MCF 10A (cell line): ENCODE measurements at regions of chr10 and their contacts with region 1.

Region 1: GRCh38 chr10:104300736-104301292 is 31.8 kb downstream of the GSTO2 start:
- DNase-seq: peak; percentile 90
- H3K4me3 Mint-ChIP-seq: no peak overlapping the region
- H3K27ac Mint-ChIP-seq: peak overlapping the region; percentile 93
- H3K4me1 Mint-ChIP-seq: peaks cover 34% of the 10 kb centered on the region
- H3K27me3 Mint-ChIP-seq: no peaks in the 10 kb centered on the region
- CTCF ChIP-seq: no peak

Region 2: DNA sequence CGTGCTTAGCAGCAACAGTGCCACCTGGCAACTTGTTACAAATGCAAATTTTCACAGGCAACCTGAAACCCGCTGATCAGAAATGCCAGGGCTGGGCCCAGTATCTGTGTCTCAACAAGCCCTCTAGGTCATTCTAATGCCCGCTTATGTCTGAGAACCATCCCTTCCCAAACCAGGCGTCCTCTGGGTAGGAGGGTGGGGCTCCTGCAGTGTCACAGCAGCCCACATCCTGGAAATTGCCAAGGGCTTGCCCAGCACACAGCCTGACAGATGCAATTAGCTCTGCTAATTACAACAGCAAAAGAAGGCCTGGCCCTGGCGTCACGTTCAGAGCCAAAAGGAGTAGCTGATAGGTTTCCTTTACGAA is 21.6 kb after region 1 on chr10:
- CTCF ChIA-PET with region 1: interaction called, 105 read pairs
- POLR2A ChIA-PET with region 1: interaction called, 95 read pairs
- intact Hi-C with region 1: no loop called
- DNase-seq: peak; percentile 91
- H3K4me3 Mint-ChIP-seq: no peak overlapping the region
- H3K27ac Mint-ChIP-seq: peak overlapping the region; percentile 95
- H3K4me1 Mint-ChIP-seq: peaks cover 74% of the 10 kb centered on the region
- H3K27me3 Mint-ChIP-seq: no peaks in the 10 kb centered on the region
- CTCF ChIP-seq: no peak

Region 3: DNA sequence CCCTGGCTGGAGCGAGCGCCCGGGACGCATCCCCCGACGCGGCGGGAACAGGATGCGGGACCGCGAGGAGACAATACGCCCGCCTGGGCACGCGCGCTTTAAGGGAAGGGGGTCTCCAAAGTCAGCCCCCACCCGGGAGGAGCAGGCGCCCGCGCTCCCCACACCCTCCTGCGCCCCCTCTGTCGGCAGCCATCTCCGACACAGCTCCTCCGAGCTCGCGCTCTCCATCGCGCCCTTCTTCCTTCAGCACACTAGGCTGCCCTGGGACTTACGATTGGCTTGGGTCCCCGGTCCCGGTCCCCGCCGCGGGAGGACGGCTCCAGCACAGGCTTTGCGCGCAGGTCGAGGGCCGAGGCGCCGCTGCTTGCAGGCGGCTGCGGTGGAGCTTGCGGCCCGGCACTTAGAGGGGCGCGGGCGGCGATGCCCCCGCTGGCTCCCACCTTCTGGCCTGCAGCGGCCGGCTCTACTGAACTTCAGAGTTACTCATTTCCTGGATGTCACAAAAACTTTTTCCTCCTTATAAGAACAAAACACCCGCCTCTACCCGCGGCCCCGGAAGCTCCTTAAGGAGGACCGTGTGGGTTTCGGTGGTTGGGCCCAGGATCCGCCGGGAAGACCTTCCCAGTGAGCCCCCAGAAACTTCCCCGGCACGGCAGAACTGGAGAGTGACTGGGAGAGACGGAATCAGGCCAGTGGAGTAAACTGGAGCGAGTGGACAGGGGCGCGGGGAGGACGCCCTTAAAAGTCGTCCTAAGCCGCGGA is 37.3 kb after region 1 on chr10 and contains the start of gene ITPRIP:
- CTCF ChIA-PET with region 1: interaction called, 33 read pairs
- POLR2A ChIA-PET with region 1: interaction called, 67 read pairs
- intact Hi-C with region 1: loop called (anchors 2 kb)
- DNase-seq: peak; percentile 81
- H3K4me3 Mint-ChIP-seq: peak within 1 kb of the TSS; percentile 80
- H3K27ac Mint-ChIP-seq: peak within 1 kb of the TSS; percentile 97
- H3K4me1 Mint-ChIP-seq: peaks cover 39% of the 10 kb centered on the region
- H3K27me3 Mint-ChIP-seq: no peaks in the 10 kb centered on the region
- CTCF ChIP-seq: no peak
- total RNA-seq, gene ITPRIP: 29.4 and 29.8 TPM in 2 replicates

Region 4: DNA sequence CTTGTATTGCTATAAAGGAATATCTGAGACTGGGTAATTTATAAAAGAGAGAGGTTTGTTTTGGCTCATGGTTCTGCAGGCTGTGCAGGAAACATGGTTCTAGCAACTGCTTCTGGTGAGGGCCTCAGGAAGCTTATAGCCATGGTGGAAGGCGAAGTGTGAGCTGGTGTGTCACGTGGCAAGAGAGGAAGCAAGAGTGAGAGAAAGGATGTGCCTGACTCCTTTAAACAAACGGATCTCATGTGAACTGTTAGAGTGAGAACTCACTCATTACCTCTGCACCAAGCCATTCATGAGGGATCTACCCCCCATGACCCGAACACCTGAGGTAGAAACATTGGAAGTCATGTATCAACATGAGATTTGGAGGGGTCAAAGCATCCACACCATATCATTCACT is 45.1 kb after region 1 on chr10:
- CTCF ChIA-PET with region 1: interaction called, 406 read pairs
- POLR2A ChIA-PET with region 1: interaction called, 14 read pairs
- intact Hi-C with region 1: loop called (anchors 1 kb)
- DNase-seq: no peak
- H3K4me3 Mint-ChIP-seq: no peak overlapping the region
- H3K27ac Mint-ChIP-seq: no peak overlapping the region
- H3K4me1 Mint-ChIP-seq: no peaks in the 10 kb centered on the region
- H3K27me3 Mint-ChIP-seq: no peaks in the 10 kb centered on the region
- CTCF ChIP-seq: no peak